Gastrocnemius medialis (tissue), 4 donors: ENCODE measurements at regions of chr12 and their contacts with region 1.

Region 1: DNA sequence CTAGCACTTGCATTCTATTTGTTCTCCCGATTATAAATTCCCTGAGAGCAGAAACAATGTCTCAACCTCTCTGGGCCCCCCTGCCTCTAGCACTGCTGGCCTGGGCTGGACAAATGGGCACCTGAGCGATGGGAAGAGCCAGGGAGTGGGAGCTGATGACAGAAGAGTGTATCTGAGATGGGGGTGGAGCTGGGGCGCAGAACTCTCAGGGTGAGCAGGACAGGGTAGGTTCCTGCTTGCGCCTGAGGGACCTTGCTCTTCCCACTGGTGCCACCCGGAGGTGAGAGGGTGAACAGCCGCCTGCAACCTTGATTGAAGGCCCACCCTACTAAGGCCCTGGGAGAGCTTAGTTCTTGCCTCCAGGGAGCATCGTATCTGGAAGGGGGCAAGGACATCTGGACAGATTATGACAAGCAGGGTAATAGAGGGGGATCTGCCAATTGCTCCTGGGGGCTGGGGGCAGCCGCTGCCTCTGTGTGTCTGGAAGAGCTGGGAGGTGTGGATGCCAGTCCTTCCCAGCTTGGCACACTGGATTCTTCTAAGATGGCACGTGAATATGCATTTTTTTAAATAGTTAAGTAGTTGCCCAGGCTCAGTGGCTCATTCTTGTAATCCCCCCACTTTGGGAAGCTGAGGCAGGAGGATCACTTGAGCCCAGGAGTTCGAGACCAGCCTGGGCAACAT is 43.0 kb upstream of the TSPAN9 start:
- DNase-seq: peak; percentile 67 to 94
- ATAC-seq: peak; percentile 79 to 81
- H3K4me3 ChIP-seq: peak overlapping the region in 3 of 4 donors; percentile 20 to 33 (median 24)
- H3K27ac ChIP-seq: peak overlapping the region; percentile 78 to 95 (median 91)
- H3K4me1 ChIP-seq: peaks cover 24 to 36% of the 10 kb centered on the region in 2 donors
- H3K27me3 ChIP-seq: no peaks in the 10 kb centered on the region
- CTCF ChIP-seq: peak; percentile 83 to 91 (median 89)
- POLR2A ChIP-seq: peak in 1 of 2 donors; percentile 65

Region 2: GRCh38 chr12:2834581-2835491 is 199.4 kb before region 1 on chr12 and contains the start of gene NRIP2:
- in situ Hi-C with region 1: no loop called
- intact Hi-C with region 1: no loop called
- DNase-seq: no peak
- ATAC-seq: peak in 1 of 2 donors; percentile 39
- H3K4me3 ChIP-seq: peak within 1 kb of the TSS in 2 of 4 donors; percentile 28 to 37
- H3K27ac ChIP-seq: no peak within 1 kb of the TSS
- H3K4me1 ChIP-seq: peaks cover 0 to 6% of the 10 kb centered on the region in 2 donors
- H3K27me3 ChIP-seq: peaks cover 0 to 4% (median 0%) of the 10 kb centered on the region in 3 donors
- CTCF ChIP-seq: no peak
- POLR2A ChIP-seq: no peak
- total RNA-seq, gene NRIP2: 1.3 to 5.2 (median 2.0) TPM in 3 of 4 donors, not detected in the other

Region 3: DNA sequence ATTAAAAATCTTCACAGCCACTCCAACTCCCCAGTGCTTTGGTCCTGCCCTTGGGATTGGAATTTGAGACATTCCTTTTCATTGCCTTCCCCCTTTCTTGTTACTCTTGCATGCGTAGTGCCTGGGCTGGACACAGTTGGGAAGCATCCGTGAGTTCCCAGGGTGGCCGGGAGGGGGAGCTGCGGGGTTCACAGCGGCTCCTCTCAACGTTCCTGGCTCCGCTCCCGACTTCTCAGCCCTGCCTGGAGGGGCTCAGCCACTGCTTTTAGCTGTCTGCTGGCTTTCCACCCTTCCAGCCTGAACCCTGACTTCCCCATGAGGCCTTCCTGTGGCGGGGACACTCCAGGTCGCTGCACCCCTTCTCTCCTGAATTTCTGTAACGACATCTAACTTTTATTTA is 180.6 kb before region 1 on chr12:
- in situ Hi-C with region 1: loop called in 1 of 4 experiments (anchors 10 kb)
- intact Hi-C with region 1: no loop called
- DNase-seq: peak; percentile 53 to 72
- ATAC-seq: peak; percentile 51 to 70
- H3K4me3 ChIP-seq: no peak overlapping the region
- H3K27ac ChIP-seq: no peak overlapping the region
- H3K4me1 ChIP-seq: peaks cover 5 to 12% of the 10 kb centered on the region in 2 donors
- H3K27me3 ChIP-seq: no peaks in the 10 kb centered on the region
- CTCF ChIP-seq: peak; percentile 71 to 90 (median 77)
- POLR2A ChIP-seq: no peak

Region 4: GRCh38 chr12:2877047-2877952 is 156.9 kb before region 1 on chr12 and contains the starts of genes FOXM1 and RHNO1:
- in situ Hi-C with region 1: loop called (anchors 5 to 25 kb)
- intact Hi-C with region 1: no loop called
- DNase-seq: peak; percentile 84 to 87
- ATAC-seq: peak; percentile 95 to 96
- H3K4me3 ChIP-seq: peak within 1 kb of the TSS; percentile 75 to 95 (median 91)
- H3K27ac ChIP-seq: peak within 1 kb of the TSS; percentile 82 to 87 (median 86)
- H3K4me1 ChIP-seq: peaks cover 0 to 11% of the 10 kb centered on the region in 2 donors
- H3K27me3 ChIP-seq: no peaks in the 10 kb centered on the region
- CTCF ChIP-seq: peak in 4 of 5 experiments; percentile 17 to 34 (median 24)
- POLR2A ChIP-seq: peak; percentile 39 to 46
- total RNA-seq, gene FOXM1: 0.95 to 1.1 TPM in 2 of 4 donors, not detected in the others
- total RNA-seq, gene RHNO1: 4.9 to 11.8 (median 6.7) TPM

Region 5: DNA sequence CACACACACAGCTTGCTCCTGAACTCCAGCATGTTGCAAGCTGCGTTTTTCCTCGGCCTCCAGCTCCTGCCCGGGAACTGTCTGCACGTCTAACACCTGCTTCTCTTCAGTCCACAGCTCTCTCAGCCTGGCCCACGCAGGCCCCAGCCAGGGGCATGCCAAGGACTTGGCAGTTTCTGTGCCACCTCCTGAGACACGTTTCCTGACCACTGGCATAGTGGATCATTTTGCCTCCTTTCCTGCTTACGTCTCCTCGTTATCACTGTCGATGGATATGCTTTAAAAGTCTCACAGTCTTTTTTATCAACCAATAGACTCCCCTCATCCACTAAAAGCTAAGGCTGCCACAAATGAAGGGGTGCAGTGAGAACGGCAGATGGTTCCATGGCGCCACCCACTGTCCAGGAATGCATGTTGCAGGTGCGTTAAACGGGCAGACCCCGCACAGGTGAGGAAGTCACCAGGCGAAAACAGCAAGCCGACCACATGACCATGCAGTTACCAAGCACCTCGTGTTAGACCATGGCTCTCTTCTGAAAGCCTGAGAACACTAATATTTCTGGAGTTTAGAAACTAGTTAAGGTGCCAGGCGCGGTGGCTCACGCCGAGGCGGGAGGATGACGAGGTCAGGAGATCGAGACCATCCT is 89.7 kb before region 1 on chr12:
- in situ Hi-C with region 1: loop called in 1 of 4 experiments (anchors 5 kb)
- intact Hi-C with region 1: no loop called
- DNase-seq: peak in 1 of 2 donors; percentile 69
- ATAC-seq: peak; percentile 74 to 87
- H3K4me3 ChIP-seq: no peak overlapping the region
- H3K27ac ChIP-seq: peak overlapping the region; percentile 3 to 70 (median 34)
- H3K4me1 ChIP-seq: no peaks in the 10 kb centered on the region
- H3K27me3 ChIP-seq: no peaks in the 10 kb centered on the region
- CTCF ChIP-seq: peak; percentile 77 to 89 (median 87)
- POLR2A ChIP-seq: no peak

Region 6: GRCh38 chr12:2959505-2960389 is 74.5 kb before region 1 on chr12:
- in situ Hi-C with region 1: loop called in 3 of 4 experiments (anchors 5 to 10 kb)
- intact Hi-C with region 1: loop called (anchors 2 kb)
- DNase-seq: peak; percentile 56 to 80
- ATAC-seq: peak; percentile 33 to 43
- H3K4me3 ChIP-seq: peak overlapping the region; percentile 61 to 87 (median 74)
- H3K27ac ChIP-seq: peak overlapping the region; percentile 87 to 98 (median 96)
- H3K4me1 ChIP-seq: peaks cover 40 to 46% of the 10 kb centered on the region in 2 donors
- H3K27me3 ChIP-seq: no peaks in the 10 kb centered on the region
- CTCF ChIP-seq: peak in 3 of 5 experiments; percentile 18 to 26 (median 20)
- POLR2A ChIP-seq: peak; percentile 91

Region 7: DNA sequence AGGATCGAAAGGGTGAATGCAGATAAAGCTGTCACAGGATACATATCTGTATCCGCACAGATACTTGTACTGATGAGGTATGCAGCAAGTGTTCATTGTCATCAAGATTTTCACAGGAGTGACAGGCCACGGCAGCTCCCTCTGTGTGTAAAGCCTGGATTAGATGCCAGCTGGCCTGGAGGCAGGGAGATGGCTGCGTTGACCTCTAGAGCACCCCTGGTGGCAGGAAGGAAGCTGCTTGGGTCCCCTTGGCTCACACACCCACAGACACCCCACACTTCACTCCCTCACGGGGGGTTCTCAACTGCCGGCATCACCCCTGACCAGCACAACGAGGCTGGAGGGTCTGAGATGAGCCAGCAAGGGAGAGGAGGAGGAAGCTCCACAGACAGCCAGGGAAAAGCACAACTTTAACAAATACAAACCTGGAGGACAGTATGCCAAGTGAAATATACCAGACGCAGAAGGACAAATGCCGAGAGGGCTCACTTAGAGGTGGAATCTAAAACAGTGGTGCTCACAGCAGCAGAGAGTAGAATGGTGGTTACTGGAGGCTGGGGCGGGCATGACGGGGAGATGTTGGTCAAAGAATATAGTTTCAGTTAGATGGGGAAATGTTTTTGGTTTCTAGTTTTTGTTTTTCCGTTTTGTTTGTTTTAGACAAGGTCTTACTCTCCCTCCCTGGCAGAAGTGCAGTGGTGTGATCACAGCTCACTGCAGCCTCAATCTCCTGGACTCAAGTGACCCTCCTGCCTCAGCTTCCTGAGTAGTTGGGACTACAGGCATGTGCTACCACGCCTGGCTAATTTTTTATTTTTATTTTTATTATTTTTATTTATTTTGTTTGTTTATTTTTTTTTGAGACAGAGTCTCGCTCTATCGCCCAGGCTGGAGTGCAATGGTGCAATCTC is 29.3 kb before region 1 on chr12:
- in situ Hi-C with region 1: no loop called
- intact Hi-C with region 1: loop called (anchors 1 kb)
- DNase-seq: peak in 1 of 2 donors; percentile 58
- ATAC-seq: no peak
- H3K4me3 ChIP-seq: no peak overlapping the region
- H3K27ac ChIP-seq: peak overlapping the region; percentile 95 to 99 (median 97)
- H3K4me1 ChIP-seq: peaks cover 50 to 60% of the 10 kb centered on the region in 2 donors
- H3K27me3 ChIP-seq: no peaks in the 10 kb centered on the region
- CTCF ChIP-seq: peak in 1 of 5 experiments; percentile 37
- POLR2A ChIP-seq: no peak